CD8-positive, alpha-beta T cell (primary cell): ENCODE measurements at regions of chr3 and their contacts with region 1.

Region 1: GRCh38 chr3:115692887-115693524 is 69.7 kb downstream of the GAP43 start:
- DNase-seq: peak; percentile 37 to 77 (median 67)
- ATAC-seq: peak; percentile 88
- H3K4me3 ChIP-seq: no peak overlapping the region
- H3K4me3 Mint-ChIP-seq: no peak overlapping the region
- H3K27ac ChIP-seq: no peak overlapping the region
- H3K27ac Mint-ChIP-seq: no peak overlapping the region
- H3K4me1 ChIP-seq: no peaks in the 10 kb centered on the region
- H3K4me1 Mint-ChIP-seq: peaks cover 3% of the 10 kb centered on the region
- H3K27me3 ChIP-seq: no peaks in the 10 kb centered on the region
- H3K27me3 Mint-ChIP-seq: peaks cover 3% of the 10 kb centered on the region
- CTCF ChIP-seq: peak; percentile 69

Region 2: DNA sequence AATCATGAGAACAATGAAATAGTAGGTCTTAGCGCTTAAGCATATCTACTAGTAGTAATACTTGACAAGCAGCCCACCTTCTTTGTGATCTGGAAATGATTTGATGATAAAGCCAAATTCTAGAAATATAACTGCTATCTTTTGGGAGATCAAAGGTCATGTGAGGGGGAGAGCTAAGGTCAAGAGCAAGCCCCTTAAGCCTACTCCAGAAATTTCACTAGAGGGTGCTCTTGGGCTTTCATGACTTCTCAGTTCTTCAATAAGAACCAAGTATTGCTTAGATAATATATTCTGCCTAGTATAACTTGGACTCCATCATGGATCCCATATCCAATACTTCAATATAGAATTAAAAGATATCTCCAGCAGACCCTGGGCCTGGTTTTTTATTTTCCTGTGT is 865.5 kb before region 1 on chr3:
- CTCF ChIA-PET with region 1: interaction called, 3 read pairs
- POLR2A ChIA-PET with region 1: no interaction called
- intact Hi-C with region 1: loop called (anchors 2 to 5 kb)
- DNase-seq: peak in 2 of 9 experiments; percentile 43 to 54
- ATAC-seq: no peak
- H3K4me3 ChIP-seq: no peak overlapping the region
- H3K4me3 Mint-ChIP-seq: no peak overlapping the region
- H3K27ac ChIP-seq: no peak overlapping the region
- H3K27ac Mint-ChIP-seq: no peak overlapping the region
- H3K4me1 ChIP-seq: no peaks in the 10 kb centered on the region
- H3K4me1 Mint-ChIP-seq: peaks cover 10% of the 10 kb centered on the region
- H3K27me3 ChIP-seq: no peaks in the 10 kb centered on the region
- H3K27me3 Mint-ChIP-seq: no peaks in the 10 kb centered on the region
- CTCF ChIP-seq: peak; percentile 22

Region 3: DNA sequence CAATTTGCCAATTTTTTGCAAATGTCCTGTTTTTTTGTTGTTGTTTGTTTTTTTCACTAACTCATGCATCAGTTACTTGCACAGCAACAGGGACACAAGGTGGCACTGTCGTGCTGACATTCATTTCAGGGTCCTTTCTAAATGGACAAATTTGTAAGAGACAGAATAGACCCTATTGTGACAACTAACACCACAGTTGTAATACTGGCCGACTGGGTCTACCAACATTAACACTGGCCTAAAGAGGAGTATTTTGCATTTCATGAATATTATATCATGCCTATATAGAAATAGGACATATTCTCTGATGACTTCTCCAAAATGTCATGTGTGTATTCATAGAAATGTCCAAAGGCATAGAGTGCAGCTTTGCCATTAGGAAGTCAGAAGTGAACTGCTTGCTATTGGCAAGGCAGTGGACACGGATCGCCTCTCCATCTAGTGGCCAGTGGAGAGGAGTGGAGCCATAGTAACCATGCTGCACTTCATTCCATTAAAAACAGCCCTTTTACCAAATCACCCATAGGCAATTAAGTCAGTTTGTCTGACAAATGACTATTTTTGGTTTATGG is 600.7 kb before region 1 on chr3:
- CTCF ChIA-PET with region 1: interaction called, 13 read pairs
- POLR2A ChIA-PET with region 1: no interaction called
- intact Hi-C with region 1: loop called (anchors 1 to 2 kb)
- DNase-seq: peak; percentile 32 to 77 (median 65)
- ATAC-seq: peak; percentile 72
- H3K4me3 ChIP-seq: no peak overlapping the region
- H3K4me3 Mint-ChIP-seq: no peak overlapping the region
- H3K27ac ChIP-seq: no peak overlapping the region
- H3K27ac Mint-ChIP-seq: peak overlapping the region; percentile 8
- H3K4me1 ChIP-seq: no peaks in the 10 kb centered on the region
- H3K4me1 Mint-ChIP-seq: peaks cover 50% of the 10 kb centered on the region
- H3K27me3 ChIP-seq: no peaks in the 10 kb centered on the region
- H3K27me3 Mint-ChIP-seq: no peaks in the 10 kb centered on the region
- CTCF ChIP-seq: peak; percentile 89

Region 4: DNA sequence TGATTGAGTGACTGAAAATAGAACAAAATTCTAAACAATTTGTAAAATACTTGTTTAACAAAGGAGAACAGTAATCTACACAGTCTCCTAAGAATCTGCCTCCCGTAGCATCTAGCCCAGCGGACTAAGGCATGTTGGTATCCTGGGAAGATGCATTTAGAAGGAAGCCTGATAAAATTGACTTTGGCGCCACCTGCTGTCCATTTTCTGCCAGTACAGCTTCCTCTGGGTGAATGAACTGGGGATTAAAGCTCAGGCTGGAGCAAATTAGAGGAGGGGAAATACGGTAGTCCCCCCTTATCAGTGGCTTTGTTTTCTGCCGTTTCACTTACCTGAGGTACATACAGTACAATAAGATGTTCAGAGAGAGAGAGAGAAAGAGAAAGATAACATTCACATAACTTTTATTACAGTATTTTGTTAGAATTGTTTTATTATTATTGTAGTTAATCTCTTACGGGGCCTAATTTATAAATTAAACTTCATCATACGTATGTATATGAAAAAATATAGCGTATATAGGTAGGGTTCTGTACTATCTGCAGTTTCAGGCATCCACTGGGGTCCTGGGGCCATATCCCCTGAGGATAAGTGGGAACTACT is 121.9 kb after region 1 on chr3:
- CTCF ChIA-PET with region 1: no interaction called
- POLR2A ChIA-PET with region 1: no interaction called
- intact Hi-C with region 1: loop called (anchors 2 kb)
- DNase-seq: peak; percentile 38 to 78 (median 70)
- ATAC-seq: peak; percentile 66
- H3K4me3 ChIP-seq: no peak overlapping the region
- H3K4me3 Mint-ChIP-seq: no peak overlapping the region
- H3K27ac ChIP-seq: no peak overlapping the region
- H3K27ac Mint-ChIP-seq: no peak overlapping the region
- H3K4me1 ChIP-seq: no peaks in the 10 kb centered on the region
- H3K4me1 Mint-ChIP-seq: no peaks in the 10 kb centered on the region
- H3K27me3 ChIP-seq: no peaks in the 10 kb centered on the region
- H3K27me3 Mint-ChIP-seq: peaks cover 10% of the 10 kb centered on the region
- CTCF ChIP-seq: peak; percentile 100

Region 5: DNA sequence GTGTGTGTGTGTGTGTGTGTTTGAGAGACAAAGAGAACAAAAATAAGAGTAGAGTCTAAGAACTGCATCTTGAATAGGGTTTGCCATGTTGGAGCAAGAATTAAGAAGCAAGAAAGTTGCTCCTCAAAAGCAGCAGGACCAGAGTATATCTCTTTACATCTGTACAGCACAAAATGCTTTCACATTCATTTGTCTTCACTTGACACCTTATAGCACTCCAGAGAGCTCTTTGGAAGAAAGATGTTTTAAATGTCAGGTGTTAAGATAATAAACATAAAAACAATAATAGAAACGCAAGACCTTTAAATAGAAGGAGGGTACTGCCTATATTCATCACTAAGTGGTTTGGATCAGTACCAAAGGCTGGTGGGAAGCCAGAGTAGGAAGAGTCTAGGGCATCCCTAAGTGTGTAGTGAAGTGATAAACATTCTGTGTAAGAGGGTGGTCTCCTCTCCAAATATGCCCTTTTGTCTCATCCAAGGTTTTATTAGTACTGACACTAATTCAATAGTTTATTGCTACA is 771.3 kb after region 1 on chr3:
- CTCF ChIA-PET with region 1: no interaction called
- POLR2A ChIA-PET with region 1: no interaction called
- intact Hi-C with region 1: no loop called
- DNase-seq: no peak
- ATAC-seq: no peak
- H3K4me3 ChIP-seq: no peak overlapping the region
- H3K4me3 Mint-ChIP-seq: no peak overlapping the region
- H3K27ac ChIP-seq: no peak overlapping the region
- H3K27ac Mint-ChIP-seq: no peak overlapping the region
- H3K4me1 ChIP-seq: no peaks in the 10 kb centered on the region
- H3K4me1 Mint-ChIP-seq: no peaks in the 10 kb centered on the region
- H3K27me3 ChIP-seq: no peaks in the 10 kb centered on the region
- H3K27me3 Mint-ChIP-seq: no peaks in the 10 kb centered on the region
- CTCF ChIP-seq: no peak